GM12878 (cell line): ENCODE measurements at regions of chr19 and their contacts with region 1.

Region 1: DNA sequence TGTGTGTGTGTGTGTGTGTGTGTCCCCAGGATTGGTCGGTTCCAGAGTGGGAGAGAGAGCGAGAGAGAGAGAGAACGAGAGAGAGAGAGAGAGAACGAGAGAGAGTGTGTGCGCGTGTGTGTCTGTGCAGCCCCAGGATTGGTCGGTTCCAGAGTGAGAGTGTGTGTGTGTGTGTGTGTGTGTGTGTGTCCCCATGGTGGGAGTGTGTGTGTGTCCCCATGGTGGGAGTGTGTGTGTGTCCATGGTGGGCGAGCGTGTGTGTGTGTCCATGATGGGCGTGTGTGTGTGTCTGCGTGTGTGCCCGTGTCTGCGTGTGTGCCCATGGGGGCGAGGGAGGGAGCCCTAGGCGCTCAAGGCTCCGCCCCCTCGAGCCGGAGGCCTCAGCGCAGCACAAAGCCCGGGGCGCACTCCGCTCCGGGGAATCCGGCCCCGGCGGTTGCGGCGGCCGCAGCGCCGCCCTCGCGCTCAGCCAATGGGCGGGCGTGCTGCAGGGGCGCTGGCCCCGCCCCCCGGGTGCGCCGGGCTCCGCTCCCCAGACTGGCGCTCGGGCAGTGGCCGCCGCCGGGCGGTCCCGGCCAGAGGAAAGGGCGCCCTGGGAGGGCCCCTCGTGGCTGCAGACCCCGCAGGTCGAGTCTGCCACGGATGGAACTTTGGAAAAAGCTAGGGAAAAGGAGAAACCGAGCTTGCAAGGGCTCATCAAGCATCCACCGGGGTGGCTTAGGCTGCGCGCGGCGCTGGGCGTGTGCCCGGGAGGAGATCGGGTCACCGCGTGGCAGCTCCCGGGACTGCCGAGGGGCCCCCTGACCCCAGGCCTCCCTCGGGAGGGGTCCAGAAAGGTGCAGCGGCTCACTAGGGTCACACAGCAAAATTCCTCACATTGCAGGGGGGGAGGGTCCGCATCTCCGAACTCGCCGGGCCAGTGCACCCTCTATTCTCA is 96.2 kb downstream of the INSR start:
- DNase-seq: peak; percentile 81
- ATAC-seq: peak; percentile 89
- H3K4me3 ChIP-seq: peak overlapping the region; percentile 70
- H3K27ac ChIP-seq: peak overlapping the region; percentile 75
- H3K4me1 ChIP-seq: peaks cover 17% of the 10 kb centered on the region
- H3K27me3 ChIP-seq: no peaks in the 10 kb centered on the region
- CTCF ChIP-seq: peak in 2 of 3 experiments; percentile 26 to 34; a peak in 2 of 6 replicates
- EP300 ChIP-seq: peak; percentile 16 to 52; a peak in 1 of 4 replicates
- POLR2A ChIP-seq: peak; percentile 80
- RAD21 ChIP-seq: peak; percentile 17; the same call in 1 of the 2 replicates

Region 2: GRCh38 chr19:7145494-7146485 is 52.2 kb before region 1 on chr19:
- CTCF ChIA-PET with region 1: interaction called, 10 read pairs
- POLR2A ChIA-PET with region 1: no interaction called
- RAD21 ChIA-PET with region 1: no interaction called
- SMC1A ChIA-PET with region 1: interaction called, 3 read pairs
- in situ Hi-C with region 1: no loop called
- intact Hi-C with region 1: no loop called
- DNase-seq: no peak
- ATAC-seq: no peak
- H3K4me3 ChIP-seq: no peak overlapping the region
- H3K27ac ChIP-seq: no peak overlapping the region
- H3K4me1 ChIP-seq: no peaks in the 10 kb centered on the region
- H3K27me3 ChIP-seq: no peaks in the 10 kb centered on the region
- CTCF ChIP-seq: no peak
- EP300 ChIP-seq: no peak
- POLR2A ChIP-seq: no peak
- RAD21 ChIP-seq: no peak

Region 3: DNA sequence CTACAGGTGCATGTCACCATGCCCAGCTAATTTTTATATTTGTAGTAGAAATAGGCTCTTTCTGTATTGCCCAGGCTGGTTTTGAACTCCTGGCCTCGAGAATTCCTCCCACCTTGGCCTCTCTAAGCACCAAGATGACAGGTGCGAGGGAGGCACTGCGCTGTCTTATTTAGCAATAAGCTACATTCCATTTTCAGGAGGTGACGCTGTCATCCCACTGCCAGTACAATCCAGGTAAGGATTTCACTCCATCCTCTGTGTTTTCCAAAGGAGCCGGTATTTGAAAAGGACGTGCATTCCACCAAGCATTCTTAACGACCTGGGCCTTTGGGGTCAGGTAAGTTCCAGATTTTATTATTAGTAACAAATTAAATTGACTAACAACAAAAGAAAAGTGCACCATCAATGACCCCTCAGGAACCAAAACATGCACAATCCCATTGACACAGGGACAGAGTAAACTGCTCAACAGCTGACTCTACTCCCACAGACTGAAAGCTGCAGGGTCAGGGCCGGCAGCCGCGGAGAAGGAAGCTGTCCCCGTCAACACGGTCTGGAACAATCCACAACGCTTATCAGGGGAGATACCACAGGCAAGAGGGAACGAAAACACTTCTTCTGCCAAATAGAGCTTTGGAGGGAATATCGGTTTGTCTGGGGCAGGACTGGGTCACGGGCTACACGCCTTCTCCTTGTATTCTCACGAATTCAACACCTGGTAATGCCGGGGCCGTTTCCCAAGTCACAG is 13.3 kb after region 1 on chr19:
- CTCF ChIA-PET with region 1: interaction called, 5 read pairs
- POLR2A ChIA-PET with region 1: interaction called, 21 read pairs
- RAD21 ChIA-PET with region 1: interaction called, 9 read pairs
- SMC1A ChIA-PET with region 1: interaction called, 10 read pairs
- in situ Hi-C with region 1: no loop called
- intact Hi-C with region 1: no loop called
- DNase-seq: no peak
- ATAC-seq: no peak
- H3K4me3 ChIP-seq: no peak overlapping the region
- H3K27ac ChIP-seq: no peak overlapping the region
- H3K4me1 ChIP-seq: peaks cover 55% of the 10 kb centered on the region
- H3K27me3 ChIP-seq: no peaks in the 10 kb centered on the region
- CTCF ChIP-seq: no peak
- EP300 ChIP-seq: no peak
- POLR2A ChIP-seq: no peak
- RAD21 ChIP-seq: no peak

Region 4: GRCh38 chr19:7272856-7273578 is 75.0 kb after region 1 on chr19:
- CTCF ChIA-PET with region 1: interaction called, 3 read pairs
- POLR2A ChIA-PET with region 1: interaction called, 5 read pairs
- RAD21 ChIA-PET with region 1: interaction called, 14 read pairs
- SMC1A ChIA-PET with region 1: interaction called, 11 read pairs
- in situ Hi-C with region 1: no loop called
- intact Hi-C with region 1: no loop called
- DNase-seq: peak; percentile 64
- ATAC-seq: peak; percentile 97
- H3K4me3 ChIP-seq: peak overlapping the region; percentile 9; the same call in 1 of the 2 replicates
- H3K27ac ChIP-seq: peak overlapping the region; percentile 79
- H3K4me1 ChIP-seq: peaks cover 27% of the 10 kb centered on the region
- H3K27me3 ChIP-seq: no peaks in the 10 kb centered on the region
- CTCF ChIP-seq: no peak
- EP300 ChIP-seq: peak in 1 of 2 experiments; percentile 75; a peak in 2 of 4 replicates
- POLR2A ChIP-seq: no peak
- RAD21 ChIP-seq: no peak

Region 5: GRCh38 chr19:7326105-7326877 is 128.3 kb after region 1 on chr19:
- CTCF ChIA-PET with region 1: interaction called, 3 read pairs
- POLR2A ChIA-PET with region 1: interaction called, 4 read pairs
- RAD21 ChIA-PET with region 1: interaction called, 10 read pairs
- SMC1A ChIA-PET with region 1: interaction called, 4 read pairs
- in situ Hi-C with region 1: no loop called
- intact Hi-C with region 1: no loop called
- DNase-seq: no peak
- ATAC-seq: peak; percentile 52; the same call in 2 of the 3 replicates
- H3K4me3 ChIP-seq: no peak overlapping the region
- H3K27ac ChIP-seq: no peak overlapping the region
- H3K4me1 ChIP-seq: no peaks in the 10 kb centered on the region
- H3K27me3 ChIP-seq: no peaks in the 10 kb centered on the region
- CTCF ChIP-seq: peak; percentile 41 to 51 (median 42); a peak in 5 of 6 replicates
- EP300 ChIP-seq: no peak
- POLR2A ChIP-seq: no peak
- RAD21 ChIP-seq: peak; percentile 65